ENCODE measurements at regions of chr10 and their contacts with region 1.

Region 1: DNA sequence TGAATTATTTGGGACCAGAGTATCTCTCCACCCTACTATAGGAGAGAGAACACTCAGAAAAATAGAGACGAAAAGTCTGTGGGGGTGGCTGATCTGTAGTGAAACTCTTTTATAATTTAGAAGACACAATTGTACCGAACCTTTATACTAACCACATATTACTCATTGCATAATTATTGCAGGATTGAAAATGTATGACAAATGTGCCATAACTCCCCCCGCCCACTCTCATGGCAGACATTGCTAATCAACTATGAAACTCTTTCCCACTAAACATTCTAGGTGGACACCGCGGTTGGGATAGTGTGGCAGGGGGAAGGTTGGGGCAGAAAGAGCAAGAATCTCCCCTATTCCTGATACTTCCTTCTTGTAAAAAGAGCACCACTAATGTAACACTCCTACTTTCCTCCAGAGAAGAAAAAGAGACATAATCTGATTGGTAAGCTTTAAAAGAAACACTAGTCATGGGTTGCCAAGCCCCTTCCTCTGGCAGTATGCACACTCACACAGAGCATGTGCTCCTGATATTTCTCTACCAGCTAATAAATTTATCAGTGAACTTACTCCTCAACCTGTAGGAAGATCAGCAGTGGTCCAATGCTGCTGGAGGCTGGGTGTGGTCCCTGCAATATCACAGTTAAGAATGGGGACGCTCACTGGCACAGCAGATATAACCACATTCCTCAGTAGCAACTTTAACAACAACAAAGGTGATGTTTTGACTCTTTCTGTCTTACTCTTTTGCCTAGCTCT is 18.7 kb upstream of the ARID5B start:
- DNase-seq: no peak
- ATAC-seq: 0 out of 3 replicates have a peak, but pooled peaks have one; percentile 28
- H3K4me3 ChIP-seq: no peak overlapping the region
- H3K27ac ChIP-seq: no peak overlapping the region
- H3K4me1 ChIP-seq: no peaks in the 10 kb centered on the region
- H3K27me3 ChIP-seq: no peaks in the 10 kb centered on the region
- CTCF ChIP-seq: no peak
- EP300 ChIP-seq: no peak
- POLR2A ChIP-seq: no peak
- RAD21 ChIP-seq: no peak

Region 2: DNA sequence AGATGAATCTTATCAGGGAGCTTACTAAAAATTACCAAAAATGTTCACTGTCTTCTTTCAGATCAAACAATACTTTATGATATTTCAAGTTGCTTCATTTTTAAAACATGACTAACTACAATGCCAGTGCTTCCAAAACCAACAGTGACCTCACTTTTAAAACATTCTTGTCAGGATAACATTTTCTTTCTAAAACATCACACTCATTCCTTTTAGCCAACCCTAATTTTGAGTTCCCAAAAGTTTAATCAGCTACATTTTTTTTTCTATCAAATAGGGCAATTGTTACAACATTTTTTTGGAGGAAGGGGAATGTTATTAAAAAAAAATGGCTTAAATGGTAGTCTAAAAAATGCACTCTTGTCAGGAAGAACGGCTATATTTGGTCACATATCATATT is 348.6 kb after region 1 on chr10:
- CTCF ChIA-PET with region 1: no interaction called
- POLR2A ChIA-PET with region 1: no interaction called
- in situ Hi-C with region 1: loop called (anchors 10 kb)
- intact Hi-C with region 1: no loop called
- DNase-seq: no peak
- ATAC-seq: no peak
- H3K4me3 ChIP-seq: no peak overlapping the region
- H3K27ac ChIP-seq: no peak overlapping the region
- H3K4me1 ChIP-seq: no peaks in the 10 kb centered on the region
- H3K27me3 ChIP-seq: no peaks in the 10 kb centered on the region
- CTCF ChIP-seq: no peak
- EP300 ChIP-seq: no peak
- POLR2A ChIP-seq: no peak
- RAD21 ChIP-seq: no peak